GM10248 (cell line): ENCODE measurements at regions of chr14 and their contacts with region 1.

Region 1: DNA sequence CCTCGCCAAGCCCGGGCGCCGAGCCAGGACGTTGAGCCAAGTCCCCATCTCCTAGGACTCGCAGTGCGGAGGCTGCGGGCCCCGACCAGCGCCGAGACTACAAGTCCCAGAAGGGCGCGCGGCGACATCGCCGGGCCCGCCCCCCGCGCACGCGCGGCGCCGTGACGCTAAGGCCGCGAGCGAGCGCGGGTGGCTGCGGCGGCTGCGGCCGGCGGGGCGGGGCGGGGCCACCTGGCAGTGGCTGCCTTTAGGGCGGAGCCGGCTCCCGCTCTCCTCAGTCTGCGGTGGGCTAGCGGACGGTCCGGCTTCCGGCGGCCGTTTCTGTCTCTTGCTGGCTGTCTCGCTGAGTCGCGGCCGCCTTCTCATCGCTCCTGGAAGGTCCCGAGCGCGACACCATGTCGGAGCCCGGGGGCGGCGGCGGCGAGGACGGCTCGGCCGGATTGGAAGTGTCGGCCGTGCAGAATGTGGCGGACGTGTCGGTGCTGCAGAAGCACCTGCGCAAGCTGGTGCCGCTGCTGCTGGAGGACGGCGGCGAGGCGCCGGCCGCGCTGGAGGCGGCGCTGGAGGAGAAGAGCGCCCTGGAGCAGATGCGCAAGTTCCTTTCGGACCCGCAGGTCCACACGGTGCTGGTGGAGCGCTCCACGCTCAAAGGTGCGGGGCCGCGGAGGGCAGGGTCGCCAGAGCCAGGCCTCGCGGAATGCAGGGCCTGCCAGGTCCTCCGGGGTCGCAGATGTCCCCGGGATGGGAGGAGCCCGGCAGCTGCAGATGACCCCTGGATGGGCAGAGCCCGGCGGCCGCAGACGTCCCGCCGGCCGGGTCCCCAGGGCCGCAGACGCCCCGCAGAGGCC is at the start of gene DYNC1H1:
- DNase-seq: peak; percentile 93
- CTCF ChIP-seq: no peak

Region 2: GRCh38 chr14:101737414-101738339 is 226.8 kb before region 1 on chr14:
- CTCF ChIA-PET with region 1: no interaction called
- POLR2A ChIA-PET with region 1: no interaction called
- DNase-seq: no peak
- CTCF ChIP-seq: no peak

Region 3: GRCh38 chr14:101947906-101948665 is 16.4 kb before region 1 on chr14:
- CTCF ChIA-PET with region 1: interaction called, 14 read pairs
- POLR2A ChIA-PET with region 1: no interaction called
- DNase-seq: peak; percentile 100
- CTCF ChIP-seq: no peak

Region 4: DNA sequence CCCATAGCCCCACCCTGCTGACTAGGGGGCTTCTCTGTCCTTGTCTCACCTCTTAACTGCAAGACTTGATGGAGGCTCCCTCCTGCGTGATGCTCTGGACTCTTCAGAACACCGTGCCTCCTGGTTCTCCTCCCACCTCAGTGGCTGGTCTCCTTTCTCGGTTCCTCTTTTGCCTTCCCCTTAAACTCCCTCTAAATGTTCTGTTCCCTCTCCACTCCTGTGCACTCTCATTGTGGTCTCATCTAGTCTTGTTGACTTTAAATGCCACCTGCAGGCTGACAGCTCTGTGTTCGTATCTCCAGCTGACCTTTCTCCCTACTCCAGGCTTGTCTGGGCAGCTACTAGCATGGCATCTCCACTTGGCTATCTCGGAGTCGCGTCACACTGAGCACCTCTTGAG is 28.2 kb after region 1 on chr14:
- CTCF ChIA-PET with region 1: interaction called, 20 read pairs
- POLR2A ChIA-PET with region 1: interaction called, 5 read pairs
- DNase-seq: peak; percentile 72
- CTCF ChIP-seq: peak; percentile 50

Region 5: GRCh38 chr14:102096214-102097114 is 131.9 kb after region 1 on chr14:
- CTCF ChIA-PET with region 1: interaction called, 13 read pairs
- POLR2A ChIA-PET with region 1: no interaction called
- DNase-seq: peak; percentile 63
- CTCF ChIP-seq: peak; percentile 80